Mammary epithelial cell (primary cell): ENCODE measurements at regions of chr6 and their contacts with region 1.

Region 1: GRCh38 chr6:132161283-132161682 is 210.1 kb upstream of the CCN2 start:
- DNase-seq: peak; percentile 40
- H3K4me3 ChIP-seq: no peak overlapping the region
- H3K27ac ChIP-seq: no peak overlapping the region
- H3K4me1 ChIP-seq: no peaks in the 10 kb centered on the region
- H3K27me3 ChIP-seq: no peaks in the 10 kb centered on the region
- CTCF ChIP-seq: peak; percentile 46 to 73

Region 2: DNA sequence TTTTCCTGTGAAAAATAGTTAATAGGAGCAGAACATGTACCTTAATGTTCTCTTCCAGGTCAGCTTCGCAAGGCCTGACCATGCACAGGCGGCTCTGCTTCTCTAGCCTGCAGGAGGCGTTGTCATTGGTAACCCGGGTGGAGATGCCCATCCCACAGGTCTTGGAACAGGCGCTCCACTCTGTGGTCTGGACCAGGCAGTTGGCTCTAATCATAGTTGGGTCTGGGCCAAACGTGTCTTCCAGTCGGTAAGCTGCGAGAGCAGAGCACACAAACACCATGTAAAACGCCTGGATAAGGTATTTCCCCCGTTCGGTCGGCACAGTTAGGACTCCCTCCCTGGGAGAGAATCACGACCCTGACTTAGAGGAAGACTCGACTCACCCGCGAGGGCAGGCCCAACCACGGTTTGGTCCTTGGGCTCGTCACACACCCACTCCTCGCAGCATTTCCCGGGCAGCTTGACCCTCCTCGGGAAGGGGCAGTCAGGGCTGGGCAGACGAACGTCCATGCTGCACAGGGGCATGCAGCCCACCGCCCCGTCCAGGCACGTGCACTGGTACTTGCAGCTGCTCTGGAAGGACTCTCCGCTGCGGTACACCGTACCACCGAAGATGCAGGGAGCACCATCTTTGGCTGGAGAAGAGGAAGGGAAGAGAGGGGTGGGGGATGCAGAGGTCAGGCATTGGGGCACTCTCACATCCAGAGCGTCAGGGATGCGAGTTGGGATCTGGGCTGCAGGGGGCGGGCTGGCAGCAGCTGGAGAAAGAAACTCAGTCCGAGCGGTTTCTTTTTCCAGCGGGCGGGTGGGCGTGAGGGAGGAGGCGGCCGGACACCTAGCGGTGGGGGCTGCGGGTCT is 211.1 kb before region 1 on chr6:
- CTCF ChIA-PET with region 1: interaction called, 3 read pairs
- dilution Hi-C with region 1: loop called (anchors 5 kb)
- in situ Hi-C with region 1: no loop called
- intact Hi-C with region 1: loop called (anchors 1 kb)
- DNase-seq: peak; percentile 85
- H3K4me3 ChIP-seq: peak overlapping the region; percentile 42 to 77 (median 59)
- H3K27ac ChIP-seq: peak overlapping the region; percentile 27
- H3K4me1 ChIP-seq: peaks cover 46% of the 10 kb centered on the region
- H3K27me3 ChIP-seq: no peaks in the 10 kb centered on the region
- CTCF ChIP-seq: peak; percentile 31 to 66

Region 3: GRCh38 chr6:131960371-131961133 is 200.7 kb before region 1 on chr6:
- CTCF ChIA-PET with region 1: no interaction called
- dilution Hi-C with region 1: no loop called
- in situ Hi-C with region 1: loop called in 1 of 2 experiments (anchors 10 kb)
- intact Hi-C with region 1: loop called (anchors 1 kb)
- DNase-seq: no peak
- H3K4me3 ChIP-seq: no peak overlapping the region
- H3K27ac ChIP-seq: no peak overlapping the region
- H3K4me1 ChIP-seq: peaks cover 5% of the 10 kb centered on the region
- H3K27me3 ChIP-seq: no peaks in the 10 kb centered on the region
- CTCF ChIP-seq: peak; percentile 2 to 32

Region 4: DNA sequence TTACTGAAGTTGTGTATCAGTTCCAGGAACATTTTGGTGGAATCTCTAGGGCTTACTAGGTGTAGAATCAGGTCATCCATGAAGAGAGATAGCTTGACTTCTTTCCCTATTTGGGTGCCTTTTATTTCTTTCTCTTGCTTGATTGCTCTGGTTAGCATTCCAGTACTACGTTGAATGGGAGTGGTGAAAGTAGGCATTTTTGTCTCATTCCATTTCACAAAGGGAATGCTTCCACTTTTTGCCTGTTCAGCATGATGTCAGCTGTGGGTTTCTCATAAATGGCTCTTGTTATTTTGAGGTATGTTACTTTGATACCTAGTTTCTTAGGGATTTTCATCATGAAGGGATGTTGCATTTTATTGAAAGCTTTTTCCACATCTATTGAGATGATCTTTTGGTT is 44.7 kb after region 1 on chr6:
- CTCF ChIA-PET with region 1: no interaction called
- dilution Hi-C with region 1: no loop called
- in situ Hi-C with region 1: no loop called
- intact Hi-C with region 1: no loop called
- DNase-seq: no peak
- H3K4me3 ChIP-seq: no peak overlapping the region
- H3K27ac ChIP-seq: no peak overlapping the region
- H3K4me1 ChIP-seq: peaks cover 12% of the 10 kb centered on the region
- H3K27me3 ChIP-seq: no peaks in the 10 kb centered on the region
- CTCF ChIP-seq: no peak

Region 5: DNA sequence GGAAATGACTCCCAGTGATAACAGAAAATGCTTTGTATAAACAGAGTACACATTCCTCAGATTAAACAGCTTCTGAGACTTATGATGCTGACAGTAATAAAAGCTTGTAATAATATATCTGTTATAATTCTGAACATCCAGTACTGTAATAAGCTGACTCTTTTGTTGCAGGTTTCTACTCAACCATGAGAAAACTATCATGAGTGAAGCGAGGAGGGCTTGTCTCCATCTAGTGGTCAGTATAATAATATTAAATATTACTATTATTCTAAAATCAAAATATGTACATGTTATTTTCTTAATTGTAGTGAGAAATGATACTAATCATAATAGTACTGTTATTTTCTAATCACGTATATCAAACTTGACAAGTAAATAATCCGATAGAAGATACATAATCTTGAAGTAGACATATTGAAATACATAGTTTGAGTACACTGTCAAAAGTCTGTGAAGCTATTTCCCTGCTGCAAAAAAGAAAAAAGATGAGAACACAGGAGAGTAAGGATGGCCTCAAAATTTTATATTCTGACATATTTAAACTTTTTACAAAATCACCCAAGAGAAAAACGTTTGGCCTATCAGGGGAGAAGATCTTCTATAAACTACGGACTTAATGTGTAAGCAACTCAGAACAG is 56.9 kb after region 1 on chr6:
- CTCF ChIA-PET with region 1: no interaction called
- dilution Hi-C with region 1: no loop called
- in situ Hi-C with region 1: no loop called
- intact Hi-C with region 1: loop called (anchors 1 kb)
- DNase-seq: no peak
- H3K4me3 ChIP-seq: no peak overlapping the region
- H3K27ac ChIP-seq: no peak overlapping the region
- H3K4me1 ChIP-seq: no peaks in the 10 kb centered on the region
- H3K27me3 ChIP-seq: no peaks in the 10 kb centered on the region
- CTCF ChIP-seq: peak; percentile 32 to 56

Region 6: GRCh38 chr6:132259070-132259469 is 97.8 kb after region 1 on chr6:
- CTCF ChIA-PET with region 1: no interaction called
- dilution Hi-C with region 1: no loop called
- in situ Hi-C with region 1: no loop called
- intact Hi-C with region 1: loop called (anchors 5 kb)
- DNase-seq: peak; percentile 12
- H3K4me3 ChIP-seq: no peak overlapping the region
- H3K27ac ChIP-seq: no peak overlapping the region
- H3K4me1 ChIP-seq: peaks cover 4% of the 10 kb centered on the region
- H3K27me3 ChIP-seq: no peaks in the 10 kb centered on the region
- CTCF ChIP-seq: peak; percentile 41 to 60